GM12878 (cell line): ENCODE measurements at regions of chr4 and their contacts with region 1.

Region 1: GRCh38 chr4:184287697-184288255 is 70.1 kb upstream of the ENPP6 start:
- DNase-seq: no peak
- ATAC-seq: peak; percentile 4; the same call in 1 of the 3 replicates
- H3K4me3 ChIP-seq: peak overlapping the region; percentile 55
- H3K27ac ChIP-seq: peak overlapping the region; percentile 99
- H3K4me1 ChIP-seq: peaks cover 64% of the 10 kb centered on the region
- H3K27me3 ChIP-seq: no peaks in the 10 kb centered on the region
- CTCF ChIP-seq: peak in 2 of 3 experiments; percentile 13 to 27; a peak in 3 of 6 replicates
- EP300 ChIP-seq: no peak
- POLR2A ChIP-seq: 0 out of 2 replicates have a peak, but pooled peaks have one; percentile 20
- RAD21 ChIP-seq: peak; percentile 53

Region 2: DNA sequence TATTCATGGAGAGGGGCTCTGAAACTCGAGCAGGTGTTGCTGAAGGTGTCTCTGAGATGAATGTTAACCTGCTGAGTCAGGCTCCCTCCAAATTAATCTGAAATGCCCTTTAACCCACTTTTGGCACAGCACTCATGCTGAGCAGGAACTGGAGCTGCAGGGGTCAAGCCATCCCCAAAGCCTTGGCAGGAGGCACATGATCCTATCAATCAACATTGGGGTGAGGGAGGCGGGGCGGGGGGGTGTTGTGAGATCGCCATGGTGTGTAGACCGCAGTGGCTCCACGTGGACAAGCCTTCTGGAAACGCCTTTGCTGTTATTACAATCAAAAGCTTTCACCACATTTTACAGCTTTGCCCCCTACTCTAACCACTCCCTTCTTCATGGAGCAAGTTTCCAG is 86.6 kb before region 1 on chr4:
- CTCF ChIA-PET with region 1: no interaction called
- POLR2A ChIA-PET with region 1: no interaction called
- RAD21 ChIA-PET with region 1: no interaction called
- SMC1A ChIA-PET with region 1: no interaction called
- in situ Hi-C with region 1: no loop called
- intact Hi-C with region 1: no loop called
- DNase-seq: no peak
- ATAC-seq: no peak
- H3K4me3 ChIP-seq: no peak overlapping the region
- H3K27ac ChIP-seq: no peak overlapping the region
- H3K4me1 ChIP-seq: no peaks in the 10 kb centered on the region
- H3K27me3 ChIP-seq: no peaks in the 10 kb centered on the region; a peak in 2 of 4 replicates
- CTCF ChIP-seq: no peak
- EP300 ChIP-seq: no peak
- POLR2A ChIP-seq: no peak
- RAD21 ChIP-seq: no peak

Region 3: GRCh38 chr4:184318852-184319251 is 31.1 kb after region 1 on chr4:
- CTCF ChIA-PET with region 1: interaction called, 83 read pairs
- POLR2A ChIA-PET with region 1: interaction called, 149 read pairs
- RAD21 ChIA-PET with region 1: interaction called, 149 read pairs
- SMC1A ChIA-PET with region 1: interaction called, 150 read pairs
- in situ Hi-C with region 1: no loop called
- intact Hi-C with region 1: loop called (anchors 1 kb)
- DNase-seq: no peak
- ATAC-seq: peak; percentile 1
- H3K4me3 ChIP-seq: peak overlapping the region; percentile 20; the same call in 1 of the 2 replicates
- H3K27ac ChIP-seq: peak overlapping the region; percentile 92
- H3K4me1 ChIP-seq: peaks cover 52% of the 10 kb centered on the region
- H3K27me3 ChIP-seq: no peaks in the 10 kb centered on the region
- CTCF ChIP-seq: no peak
- EP300 ChIP-seq: no peak
- POLR2A ChIP-seq: no peak
- RAD21 ChIP-seq: no peak

Region 4: GRCh38 chr4:184329659-184330400 is 42.1 kb after region 1 on chr4:
- CTCF ChIA-PET with region 1: interaction called, 31 read pairs
- POLR2A ChIA-PET with region 1: interaction called, 93 read pairs
- RAD21 ChIA-PET with region 1: interaction called, 119 read pairs
- SMC1A ChIA-PET with region 1: interaction called, 102 read pairs
- in situ Hi-C with region 1: no loop called
- intact Hi-C with region 1: no loop called
- DNase-seq: peak; percentile 90
- ATAC-seq: peak; percentile 81
- H3K4me3 ChIP-seq: no peak overlapping the region
- H3K27ac ChIP-seq: peak overlapping the region; percentile 90
- H3K4me1 ChIP-seq: peaks cover 44% of the 10 kb centered on the region
- H3K27me3 ChIP-seq: no peaks in the 10 kb centered on the region
- CTCF ChIP-seq: no peak; a peak in 2 of 6 replicates
- EP300 ChIP-seq: peak; percentile 98 to 100
- POLR2A ChIP-seq: peak; percentile 53; the same call in 1 of the 2 replicates
- RAD21 ChIP-seq: peak; percentile 28; the same call in 1 of the 2 replicates

Region 5: GRCh38 chr4:184349283-184350039 is 61.7 kb after region 1 on chr4:
- CTCF ChIA-PET with region 1: interaction called, 40 read pairs
- POLR2A ChIA-PET with region 1: interaction called, 164 read pairs
- RAD21 ChIA-PET with region 1: interaction called, 193 read pairs
- SMC1A ChIA-PET with region 1: interaction called, 188 read pairs
- in situ Hi-C with region 1: loop called (anchors 5 kb)
- intact Hi-C with region 1: loop called (anchors 1 kb)
- DNase-seq: no peak
- ATAC-seq: no peak
- H3K4me3 ChIP-seq: peak overlapping the region; percentile 89
- H3K27ac ChIP-seq: peak overlapping the region; percentile 99
- H3K4me1 ChIP-seq: peaks cover 50% of the 10 kb centered on the region
- H3K27me3 ChIP-seq: no peaks in the 10 kb centered on the region
- CTCF ChIP-seq: no peak
- EP300 ChIP-seq: no peak
- POLR2A ChIP-seq: no peak
- RAD21 ChIP-seq: no peak